ENCODE measurements at regions of chr7 and their contacts with region 1.

Region 1: DNA sequence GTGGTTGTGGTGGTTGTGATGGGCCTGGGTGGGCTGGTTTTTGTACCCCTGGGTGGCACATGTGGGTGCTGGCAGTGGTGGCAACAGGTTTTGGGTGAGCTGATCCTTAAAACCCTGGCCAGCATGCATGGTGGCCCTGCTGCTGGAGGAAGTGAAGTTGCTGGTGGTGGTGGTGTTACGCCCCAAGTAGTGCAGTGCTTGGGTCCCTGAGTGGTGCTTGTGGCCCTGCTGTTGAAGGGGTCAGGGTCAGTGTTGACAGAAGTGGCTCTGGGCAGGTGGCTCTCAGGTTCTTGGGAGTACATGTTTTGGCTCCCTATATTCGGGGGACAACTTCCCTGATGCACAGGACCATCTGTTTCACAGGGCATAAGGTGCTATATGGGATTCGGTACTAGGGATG is 31.0 kb downstream of the SAMD9 start:
- DNase-seq: no peak
- ATAC-seq: no peak
- H3K4me3 ChIP-seq: no peak overlapping the region
- H3K27ac ChIP-seq: no peak overlapping the region
- H3K4me1 ChIP-seq: no peaks in the 10 kb centered on the region
- H3K27me3 ChIP-seq: peaks cover 4% of the 10 kb centered on the region; the same call in 1 of the 2 replicates
- CTCF ChIP-seq: no peak
- POLR2A ChIP-seq: no peak
- RAD21 ChIP-seq: no peak

Region 2: DNA sequence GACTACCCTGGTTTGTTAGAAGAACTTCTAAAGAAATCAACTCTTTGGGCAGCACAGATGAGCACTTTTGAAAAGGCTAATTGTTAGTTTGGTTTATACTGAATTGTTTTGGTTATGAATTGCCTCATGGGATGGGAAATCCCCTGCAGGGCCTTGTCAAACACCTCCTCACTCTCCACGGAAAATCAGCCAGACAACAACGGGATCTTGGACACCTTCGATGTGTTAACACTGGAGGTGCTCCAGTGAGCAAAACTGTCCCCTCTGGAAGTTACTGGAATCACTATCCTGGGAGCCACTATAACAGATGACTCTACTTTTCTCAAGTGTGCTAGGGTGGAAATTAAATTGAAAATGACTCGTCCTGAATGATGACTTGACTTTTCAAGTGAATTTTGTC is 289.1 kb before region 1 on chr7:
- CTCF ChIA-PET with region 1: no interaction called
- POLR2A ChIA-PET with region 1: no interaction called
- dilution Hi-C with region 1: no loop called
- in situ Hi-C with region 1: no loop called
- intact Hi-C with region 1: no loop called
- DNase-seq: peak; percentile 64
- ATAC-seq: peak; percentile 41
- H3K4me3 ChIP-seq: no peak overlapping the region
- H3K27ac ChIP-seq: no peak overlapping the region
- H3K4me1 ChIP-seq: peaks cover 26% of the 10 kb centered on the region
- H3K27me3 ChIP-seq: no peaks in the 10 kb centered on the region
- CTCF ChIP-seq: 0 out of 2 replicates have a peak, but pooled peaks have one; percentile 10
- POLR2A ChIP-seq: no peak
- RAD21 ChIP-seq: no peak

Region 3: GRCh38 chr7:93219868-93220267 is 133.1 kb after region 1 on chr7:
- CTCF ChIA-PET with region 1: no interaction called
- POLR2A ChIA-PET with region 1: no interaction called
- dilution Hi-C with region 1: no loop called
- in situ Hi-C with region 1: loop called (anchors 5 kb)
- intact Hi-C with region 1: no loop called
- DNase-seq: no peak
- ATAC-seq: no peak
- H3K4me3 ChIP-seq: no peak overlapping the region
- H3K27ac ChIP-seq: no peak overlapping the region
- H3K4me1 ChIP-seq: no peaks in the 10 kb centered on the region
- H3K27me3 ChIP-seq: peaks cover 27% of the 10 kb centered on the region
- CTCF ChIP-seq: no peak
- POLR2A ChIP-seq: no peak
- RAD21 ChIP-seq: no peak

Region 4: GRCh38 chr7:93374345-93374940 is 287.7 kb after region 1 on chr7:
- CTCF ChIA-PET with region 1: no interaction called
- POLR2A ChIA-PET with region 1: no interaction called
- dilution Hi-C with region 1: no loop called
- in situ Hi-C with region 1: no loop called
- intact Hi-C with region 1: no loop called
- DNase-seq: peak; percentile 39
- ATAC-seq: peak; percentile 98
- H3K4me3 ChIP-seq: no peak overlapping the region
- H3K27ac ChIP-seq: no peak overlapping the region
- H3K4me1 ChIP-seq: no peaks in the 10 kb centered on the region
- H3K27me3 ChIP-seq: peaks cover 8% of the 10 kb centered on the region
- CTCF ChIP-seq: peak; percentile 81
- POLR2A ChIP-seq: no peak
- RAD21 ChIP-seq: peak; percentile 74